GM13976 (cell line): ENCODE measurements at regions of chr1 and their contacts with region 1.

Region 1: GRCh38 chr1:53196485-53197270 is at the start of gene CPT2:
- DNase-seq: peak; percentile 99
- CTCF ChIP-seq: peak; percentile 9

Region 2: DNA sequence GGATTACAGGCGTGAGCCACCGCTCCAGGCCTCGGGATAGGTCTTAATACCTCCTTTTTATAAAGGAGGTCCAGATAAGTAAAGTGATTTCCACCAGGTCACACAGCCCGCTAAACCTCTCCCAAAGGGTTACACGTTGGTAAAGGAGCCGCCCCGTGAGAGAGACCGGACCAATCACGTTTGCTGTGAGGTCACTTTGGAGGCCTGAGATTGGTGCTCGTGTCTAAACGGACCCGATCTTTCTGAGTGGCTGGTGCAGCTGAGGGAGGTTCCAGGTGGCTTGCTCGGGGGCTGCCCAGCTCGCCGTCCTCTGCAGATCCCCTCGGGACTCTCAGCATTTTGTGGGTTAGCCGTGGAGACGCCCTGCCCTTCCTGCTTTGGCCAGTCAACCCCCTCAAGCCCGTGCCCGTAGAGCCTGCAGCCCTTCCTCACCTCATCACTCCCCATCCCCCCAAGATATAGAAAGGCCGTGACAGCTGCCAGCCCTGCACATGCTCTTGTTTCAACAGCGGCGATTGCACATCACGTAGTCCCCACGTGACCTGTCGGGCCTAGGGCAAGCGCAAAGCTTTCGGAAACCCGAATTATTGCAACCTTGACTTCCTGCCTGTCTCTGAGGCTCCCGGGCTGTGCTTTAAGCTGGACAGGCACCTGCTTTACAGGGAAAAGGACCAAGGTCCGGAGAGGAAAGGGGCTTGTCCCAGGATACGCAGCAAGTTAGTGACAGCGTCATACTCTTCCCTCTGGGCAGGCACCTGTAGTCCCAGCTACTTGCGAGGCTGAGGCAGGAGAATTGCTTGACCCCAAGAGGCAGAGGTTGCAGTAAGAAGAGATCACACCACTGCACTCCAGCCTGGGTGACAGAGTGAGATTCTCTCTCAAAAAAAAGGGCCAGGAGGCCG is 493.5 kb before region 1 on chr1:
- in situ Hi-C with region 1: loop called (anchors 25 kb)
- DNase-seq: peak; percentile 88
- CTCF ChIP-seq: no peak

Region 3: GRCh38 chr1:52904927-52905698 is 291.6 kb before region 1 on chr1:
- in situ Hi-C with region 1: loop called (anchors 25 kb)
- DNase-seq: peak; percentile 81
- CTCF ChIP-seq: no peak

Region 4: GRCh38 chr1:53061859-53062707 is 134.6 kb before region 1 on chr1 and contains the start of gene PODN:
- in situ Hi-C with region 1: no loop called
- DNase-seq: peak; percentile 55
- CTCF ChIP-seq: no peak

Region 5: DNA sequence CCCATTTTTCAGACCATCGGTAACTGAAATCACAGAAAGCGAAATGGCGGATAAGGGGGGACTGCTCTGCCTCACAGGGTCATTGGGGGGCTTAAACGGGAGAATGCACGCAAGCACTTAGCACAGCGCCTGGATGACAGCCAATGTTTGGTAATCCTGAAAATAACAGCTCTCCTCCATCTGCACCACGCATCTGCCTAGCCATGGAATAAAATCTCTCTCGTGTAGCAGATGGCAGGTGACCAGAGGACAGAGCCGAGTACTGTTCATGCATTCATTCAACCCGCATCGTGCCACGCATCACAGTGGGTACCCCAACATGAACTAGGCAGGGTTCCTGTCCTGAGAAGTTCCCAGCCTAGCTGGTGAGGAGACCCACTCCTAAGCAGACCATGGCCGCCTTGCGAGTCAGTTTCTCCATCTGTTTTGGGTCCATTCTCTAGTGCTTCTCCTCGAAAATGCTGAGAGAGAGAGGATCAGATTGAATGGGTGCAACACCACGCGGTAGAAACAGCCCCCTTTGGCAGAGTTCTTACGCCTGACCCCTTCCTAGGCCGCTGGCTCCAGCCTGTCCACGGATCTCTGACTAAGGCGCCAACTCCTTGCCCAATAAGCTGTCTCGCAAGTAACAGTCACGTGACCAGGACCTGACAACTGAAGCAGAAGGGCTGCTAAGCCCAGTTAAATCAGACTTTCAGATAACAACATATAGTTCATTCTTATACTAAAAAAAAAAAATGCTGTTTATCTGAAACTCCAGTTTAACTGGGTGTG is 61.5 kb before region 1 on chr1:
- in situ Hi-C with region 1: no loop called
- DNase-seq: no peak
- CTCF ChIP-seq: no peak

Region 6: DNA sequence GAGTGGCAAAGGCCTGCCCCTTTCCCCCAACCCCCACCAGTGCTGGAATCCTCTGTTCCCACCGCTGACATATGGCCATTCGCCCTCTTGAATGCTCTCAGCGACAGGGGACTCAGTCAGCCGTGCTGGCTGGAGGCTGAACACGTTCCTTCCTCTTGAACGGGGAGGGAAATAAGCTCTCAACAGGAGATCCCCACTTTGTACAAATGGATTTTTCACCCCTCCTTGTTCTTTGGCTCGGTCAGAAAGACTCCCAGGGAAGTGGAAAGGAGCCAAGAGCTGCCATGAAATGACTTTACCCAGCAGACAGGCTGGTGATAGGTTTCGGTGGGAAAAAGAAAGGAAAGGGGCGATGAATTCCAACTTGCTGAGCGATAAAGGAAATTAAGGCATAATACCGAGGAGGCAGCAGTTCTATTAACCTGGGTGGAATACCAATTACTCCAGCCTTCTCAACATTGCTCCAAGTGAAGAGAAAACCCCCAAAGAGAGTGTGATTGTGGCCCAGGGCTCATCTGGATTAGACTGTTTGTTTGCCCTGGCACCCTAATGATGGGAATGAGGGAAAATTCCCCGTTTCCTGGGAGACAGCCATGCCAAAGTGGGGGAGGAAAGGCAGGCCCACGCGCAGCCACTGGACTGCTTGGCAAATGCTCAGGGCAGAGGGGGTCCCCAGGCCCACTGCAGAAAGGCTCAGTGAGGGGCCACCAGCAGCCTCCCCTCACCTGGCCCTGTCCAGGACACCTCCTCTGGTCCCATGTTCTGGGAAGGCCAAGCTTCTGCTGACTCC is 107.2 kb after region 1 on chr1:
- in situ Hi-C with region 1: no loop called
- DNase-seq: no peak
- CTCF ChIP-seq: no peak

Region 7: GRCh38 chr1:53572065-53572814 is 375.6 kb after region 1 on chr1:
- in situ Hi-C with region 1: no loop called
- DNase-seq: no peak
- CTCF ChIP-seq: no peak